Naive thymus-derived CD4-positive, alpha-beta T cell (primary cell): ENCODE measurements at regions of chr11 and their contacts with region 1.

Region 1: DNA sequence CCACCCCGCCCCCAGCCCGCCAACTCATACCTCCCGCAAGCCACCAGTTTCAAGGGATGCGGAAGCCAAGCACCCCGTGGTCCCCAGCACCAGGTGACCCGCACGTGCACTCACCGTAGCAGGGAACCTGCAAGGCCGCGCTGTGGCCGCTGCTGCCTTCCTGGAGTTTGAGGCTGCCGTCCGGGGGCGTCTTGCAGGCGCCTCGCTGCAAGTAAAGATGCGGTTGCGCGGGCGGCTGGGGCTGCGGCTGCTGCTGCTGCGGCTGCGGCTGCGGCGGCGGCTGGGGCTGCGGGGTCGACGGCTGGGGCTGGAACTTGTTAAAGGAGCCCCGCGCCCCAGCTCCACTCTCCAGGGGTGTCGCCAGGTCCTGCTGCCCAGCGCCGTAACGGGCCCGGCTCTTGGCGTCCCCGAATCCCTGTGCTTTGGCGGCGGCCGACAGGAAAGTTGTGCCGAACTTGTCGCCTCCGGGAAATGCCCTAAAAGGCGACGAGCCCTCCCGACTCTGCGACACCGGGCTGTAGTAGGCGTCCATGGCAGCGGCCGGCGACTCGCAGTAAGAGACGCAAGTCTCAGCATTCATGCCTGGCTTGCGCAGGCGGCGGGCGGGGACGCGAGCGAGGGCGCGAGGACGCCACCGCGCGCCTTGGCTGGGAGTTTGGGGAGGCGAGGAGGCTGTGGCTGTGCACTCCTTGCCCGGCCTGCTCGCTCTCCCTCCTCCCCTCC is at the start of gene ALX4:
- DNase-seq: peak in 1 of 9 donors; percentile 47
- ATAC-seq: no peak
- H3K4me3 ChIP-seq: no peak within 1 kb of the TSS
- H3K4me3 Mint-ChIP-seq: peak within 1 kb of the TSS in 9 of 10 donors; percentile 50 to 72 (median 60)
- H3K27ac ChIP-seq: no peak within 1 kb of the TSS
- H3K27ac Mint-ChIP-seq: peak within 1 kb of the TSS in 1 of 9 donors; percentile 60
- H3K4me1 ChIP-seq: peaks cover 5% of the 10 kb centered on the region in 2 donors
- H3K4me1 Mint-ChIP-seq: peaks cover 15 to 37% (median 31%) of the 10 kb centered on the region in 7 donors
- H3K27me3 ChIP-seq: peaks cover 3 to 10% of the 10 kb centered on the region in 2 donors
- H3K27me3 Mint-ChIP-seq: peaks cover 78 to 95% (median 81%) of the 10 kb centered on the region in 5 donors
- total RNA-seq, gene ALX4: not detected

Region 2: GRCh38 chr11:43579171-43579918 is 730.3 kb before region 1 on chr11:
- CTCF ChIA-PET with region 1: no interaction called
- POLR2A ChIA-PET with region 1: no interaction called
- intact Hi-C with region 1: loop called in 1 of 2 experiments (anchors 5 kb)
- DNase-seq: peak in 2 of 9 donors; percentile 8 to 51
- ATAC-seq: peak; percentile 23
- H3K4me3 ChIP-seq: peak overlapping the region; percentile 37
- H3K4me3 Mint-ChIP-seq: peak overlapping the region; percentile 66 to 93 (median 84)
- H3K27ac ChIP-seq: no peak overlapping the region
- H3K27ac Mint-ChIP-seq: no peak overlapping the region
- H3K4me1 ChIP-seq: peaks cover 2 to 12% of the 10 kb centered on the region in 2 donors
- H3K4me1 Mint-ChIP-seq: peaks cover 24 to 52% (median 48%) of the 10 kb centered on the region in 7 donors
- H3K27me3 ChIP-seq: peaks cover 14 to 40% of the 10 kb centered on the region in 2 donors
- H3K27me3 Mint-ChIP-seq: peaks cover 80 to 95% (median 84%) of the 10 kb centered on the region in 5 donors

Region 3: GRCh38 chr11:44322243-44322642 is 12.6 kb after region 1 on chr11:
- CTCF ChIA-PET with region 1: no interaction called
- POLR2A ChIA-PET with region 1: no interaction called
- intact Hi-C with region 1: loop called in 1 of 2 experiments (anchors 2 kb)
- DNase-seq: no peak
- ATAC-seq: no peak
- H3K4me3 ChIP-seq: no peak overlapping the region
- H3K4me3 Mint-ChIP-seq: no peak overlapping the region
- H3K27ac ChIP-seq: no peak overlapping the region
- H3K27ac Mint-ChIP-seq: no peak overlapping the region
- H3K4me1 ChIP-seq: no peaks in the 10 kb centered on the region
- H3K4me1 Mint-ChIP-seq: peaks cover 0 to 10% (median 7%) of the 10 kb centered on the region in 7 donors
- H3K27me3 ChIP-seq: peaks cover under 1 to 12% of the 10 kb centered on the region in 2 donors
- H3K27me3 Mint-ChIP-seq: peaks cover 87 to 96% (median 90%) of the 10 kb centered on the region in 5 donors